MCF 10A (cell line): ENCODE measurements at regions of chr3 and their contacts with region 1.

Region 1: GRCh38 chr3:177359593-177360357 is 162.5 kb upstream of the TBL1XR1 start:
- DNase-seq: peak; percentile 98
- H3K4me3 Mint-ChIP-seq: peak overlapping the region; percentile 61
- H3K27ac Mint-ChIP-seq: peak overlapping the region; percentile 81
- H3K4me1 Mint-ChIP-seq: peaks cover 47% of the 10 kb centered on the region
- H3K27me3 Mint-ChIP-seq: no peaks in the 10 kb centered on the region
- CTCF ChIP-seq: no peak

Region 2: GRCh38 chr3:177050501-177051237 is 309.1 kb before region 1 on chr3:
- CTCF ChIA-PET with region 1: interaction called, 3 read pairs
- POLR2A ChIA-PET with region 1: interaction called, 6 read pairs
- intact Hi-C with region 1: loop called (anchors 1 kb)
- DNase-seq: peak; percentile 53
- H3K4me3 Mint-ChIP-seq: no peak overlapping the region
- H3K27ac Mint-ChIP-seq: no peak overlapping the region
- H3K4me1 Mint-ChIP-seq: peaks cover 5% of the 10 kb centered on the region
- H3K27me3 Mint-ChIP-seq: no peaks in the 10 kb centered on the region
- CTCF ChIP-seq: peak; percentile 52

Region 3: DNA sequence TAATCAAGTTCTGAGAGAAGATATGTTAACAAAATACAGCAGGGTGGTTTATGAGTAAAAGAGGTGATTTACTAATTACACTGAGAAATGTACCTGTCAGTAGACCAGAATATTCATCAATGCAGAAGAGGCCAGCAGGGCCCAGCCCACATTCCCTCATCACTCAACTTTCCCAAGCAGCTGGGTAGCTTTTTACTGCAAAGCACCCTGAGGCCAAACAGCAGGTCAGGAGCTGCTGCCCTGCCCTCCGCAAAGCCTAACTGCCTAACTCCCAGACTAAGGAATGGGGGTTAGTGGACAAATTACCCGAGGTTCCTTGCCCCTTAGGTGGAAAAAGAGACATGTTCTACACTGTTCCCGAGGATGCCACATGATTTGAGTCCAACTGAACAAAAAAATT is 270.7 kb before region 1 on chr3:
- CTCF ChIA-PET with region 1: no interaction called
- POLR2A ChIA-PET with region 1: no interaction called
- intact Hi-C with region 1: no loop called
- DNase-seq: no peak
- H3K4me3 Mint-ChIP-seq: no peak overlapping the region
- H3K27ac Mint-ChIP-seq: peak overlapping the region; percentile 51
- H3K4me1 Mint-ChIP-seq: peaks cover 17% of the 10 kb centered on the region
- H3K27me3 Mint-ChIP-seq: no peaks in the 10 kb centered on the region
- CTCF ChIP-seq: no peak

Region 4: GRCh38 chr3:177306252-177306651 is 53.5 kb before region 1 on chr3:
- CTCF ChIA-PET with region 1: no interaction called
- POLR2A ChIA-PET with region 1: interaction called, 7 read pairs
- intact Hi-C with region 1: loop called (anchors 5 kb)
- DNase-seq: peak; percentile 68
- H3K4me3 Mint-ChIP-seq: no peak overlapping the region
- H3K27ac Mint-ChIP-seq: no peak overlapping the region
- H3K4me1 Mint-ChIP-seq: peaks cover 4% of the 10 kb centered on the region
- H3K27me3 Mint-ChIP-seq: no peaks in the 10 kb centered on the region
- CTCF ChIP-seq: no peak

Region 5: GRCh38 chr3:177448987-177449975 is 89.5 kb after region 1 on chr3:
- CTCF ChIA-PET with region 1: interaction called, 4 read pairs
- POLR2A ChIA-PET with region 1: interaction called, 24 read pairs
- intact Hi-C with region 1: no loop called
- DNase-seq: peak; percentile 95
- H3K4me3 Mint-ChIP-seq: peak overlapping the region; percentile 43
- H3K27ac Mint-ChIP-seq: peak overlapping the region; percentile 63
- H3K4me1 Mint-ChIP-seq: peaks cover 21% of the 10 kb centered on the region
- H3K27me3 Mint-ChIP-seq: no peaks in the 10 kb centered on the region
- CTCF ChIP-seq: no peak

Region 6: GRCh38 chr3:177597311-177598096 is 237.7 kb after region 1 on chr3:
- CTCF ChIA-PET with region 1: no interaction called
- POLR2A ChIA-PET with region 1: interaction called, 6 read pairs
- intact Hi-C with region 1: loop called (anchors 10 kb)
- DNase-seq: peak; percentile 94
- H3K4me3 Mint-ChIP-seq: no peak overlapping the region
- H3K27ac Mint-ChIP-seq: peak overlapping the region; percentile 93
- H3K4me1 Mint-ChIP-seq: peaks cover 61% of the 10 kb centered on the region
- H3K27me3 Mint-ChIP-seq: no peaks in the 10 kb centered on the region
- CTCF ChIP-seq: no peak

Region 7: GRCh38 chr3:177753451-177754155 is 393.8 kb after region 1 on chr3:
- CTCF ChIA-PET with region 1: no interaction called
- POLR2A ChIA-PET with region 1: no interaction called
- intact Hi-C with region 1: no loop called
- DNase-seq: no peak
- H3K4me3 Mint-ChIP-seq: no peak overlapping the region
- H3K27ac Mint-ChIP-seq: no peak overlapping the region
- H3K4me1 Mint-ChIP-seq: peaks cover 11% of the 10 kb centered on the region
- H3K27me3 Mint-ChIP-seq: no peaks in the 10 kb centered on the region
- CTCF ChIP-seq: no peak

Region 8: GRCh38 chr3:177816667-177817208 is 457.0 kb after region 1 on chr3:
- CTCF ChIA-PET with region 1: interaction called, 3 read pairs
- POLR2A ChIA-PET with region 1: interaction called, 7 read pairs
- intact Hi-C with region 1: loop called (anchors 1 kb)
- DNase-seq: peak; percentile 98
- H3K4me3 Mint-ChIP-seq: peak overlapping the region; percentile 48
- H3K27ac Mint-ChIP-seq: peak overlapping the region; percentile 89
- H3K4me1 Mint-ChIP-seq: peaks cover 40% of the 10 kb centered on the region
- H3K27me3 Mint-ChIP-seq: no peaks in the 10 kb centered on the region
- CTCF ChIP-seq: peak; percentile 34

Region 9: GRCh38 chr3:178325330-178325729 is 965.6 kb after region 1 on chr3:
- CTCF ChIA-PET with region 1: no interaction called
- POLR2A ChIA-PET with region 1: interaction called, 6 read pairs
- intact Hi-C with region 1: loop called (anchors 1 kb)
- DNase-seq: peak; percentile 27
- H3K4me3 Mint-ChIP-seq: no peak overlapping the region
- H3K27ac Mint-ChIP-seq: no peak overlapping the region
- H3K4me1 Mint-ChIP-seq: peaks cover 5% of the 10 kb centered on the region
- H3K27me3 Mint-ChIP-seq: no peaks in the 10 kb centered on the region
- CTCF ChIP-seq: peak; percentile 37